ENCODE measurements at regions of chr2 and their contacts with region 1.

Region 1: DNA sequence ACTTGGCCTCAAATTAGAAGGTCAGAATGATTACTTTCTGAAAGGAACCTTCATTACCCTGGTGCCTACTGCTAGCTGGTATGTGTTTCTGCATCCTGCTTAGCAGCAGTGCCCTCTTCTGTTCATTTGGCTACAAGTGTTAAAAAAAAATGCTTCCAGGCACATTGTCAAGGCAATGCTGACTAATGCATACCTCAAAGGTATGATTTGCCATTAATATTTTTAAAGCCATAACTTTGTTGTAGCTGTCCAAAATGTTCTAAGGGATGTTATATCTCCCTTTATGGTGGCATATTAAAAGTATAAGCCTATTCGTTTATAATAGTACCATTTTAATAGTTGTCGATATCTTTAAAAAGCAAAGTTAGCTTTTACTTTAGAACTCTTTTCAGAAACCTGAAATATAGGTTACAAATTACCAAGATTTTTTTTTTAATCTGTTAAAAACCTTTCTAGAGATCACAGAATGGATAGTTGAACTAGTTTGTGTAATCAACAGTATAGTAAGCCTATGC is 52.0 kb upstream of the FAM171B start:
- DNase-seq: peak; percentile 47 to 70 (median 51)
- ATAC-seq: peak; percentile 96
- H3K4me3 ChIP-seq: no peak overlapping the region
- H3K27ac ChIP-seq: peak overlapping the region in 1 of 4 donors; percentile 36
- H3K4me1 ChIP-seq: no peaks in the 10 kb centered on the region
- H3K27me3 ChIP-seq: no peaks in the 10 kb centered on the region
- CTCF ChIP-seq: peak; percentile 46 to 92 (median 81)
- POLR2A ChIP-seq: no peak

Region 2: DNA sequence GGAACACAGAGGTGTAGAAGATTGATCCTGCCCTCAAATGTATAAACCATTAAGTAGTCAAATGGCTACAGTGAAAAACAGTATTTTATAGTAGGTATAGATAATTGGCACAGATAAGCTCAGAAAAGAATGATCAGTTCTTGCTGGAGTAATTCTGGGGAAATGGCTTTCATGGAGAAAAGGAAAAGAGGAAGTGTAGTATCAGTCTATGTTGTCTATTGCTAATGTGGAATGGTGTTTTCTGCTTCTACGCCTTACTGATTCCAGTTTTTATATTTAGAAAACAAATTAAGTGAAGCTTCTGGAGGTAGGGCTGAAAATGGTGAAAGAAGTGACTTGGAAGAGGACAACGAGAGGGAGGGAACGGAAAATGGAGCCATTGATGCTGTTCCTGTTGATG is 133.6 kb before region 1 on chr2:
- intact Hi-C with region 1: loop called (anchors 5 kb)
- DNase-seq: no peak
- ATAC-seq: no peak
- H3K4me3 ChIP-seq: no peak overlapping the region
- H3K27ac ChIP-seq: no peak overlapping the region
- H3K4me1 ChIP-seq: no peaks in the 10 kb centered on the region
- H3K27me3 ChIP-seq: no peaks in the 10 kb centered on the region
- CTCF ChIP-seq: no peak
- POLR2A ChIP-seq: no peak